Mammary epithelial cell (primary cell): ENCODE measurements at regions of chr13 and their contacts with region 1.

Region 1: DNA sequence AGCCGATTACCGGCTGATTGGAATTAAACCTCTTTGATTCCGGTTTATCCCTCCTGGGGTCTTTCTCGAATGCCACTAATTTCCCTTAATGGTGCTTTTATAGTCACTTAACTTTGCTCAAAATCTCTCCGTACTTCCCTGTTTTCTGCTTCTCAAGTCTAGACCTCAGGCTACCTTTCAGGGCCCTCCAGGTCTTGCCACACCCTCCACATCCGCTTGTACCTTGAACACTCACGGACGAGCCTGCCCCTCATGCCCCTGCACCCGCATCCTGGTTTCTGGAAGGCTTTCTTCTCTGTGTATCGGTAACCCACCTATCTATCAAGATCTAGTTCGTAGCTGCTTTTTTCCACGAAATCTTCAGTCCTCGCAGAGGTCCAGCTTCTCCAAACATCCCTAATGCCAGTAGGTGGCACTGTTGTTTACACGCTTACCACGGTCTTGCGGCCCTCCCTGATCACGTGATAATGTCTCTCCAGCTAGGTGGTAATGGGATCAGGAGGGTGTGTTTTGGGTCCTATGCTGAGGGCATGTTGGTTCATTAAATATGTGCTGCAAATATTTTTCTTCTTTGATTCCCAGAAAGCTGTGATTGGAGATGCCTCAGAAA is 13.8 kb downstream of the ATP12A start:
- DNase-seq: peak; percentile 47
- H3K4me3 ChIP-seq: no peak overlapping the region
- H3K27ac ChIP-seq: no peak overlapping the region
- H3K4me1 ChIP-seq: no peaks in the 10 kb centered on the region
- H3K27me3 ChIP-seq: no peaks in the 10 kb centered on the region
- CTCF ChIP-seq: peak; percentile 68 to 83

Region 2: DNA sequence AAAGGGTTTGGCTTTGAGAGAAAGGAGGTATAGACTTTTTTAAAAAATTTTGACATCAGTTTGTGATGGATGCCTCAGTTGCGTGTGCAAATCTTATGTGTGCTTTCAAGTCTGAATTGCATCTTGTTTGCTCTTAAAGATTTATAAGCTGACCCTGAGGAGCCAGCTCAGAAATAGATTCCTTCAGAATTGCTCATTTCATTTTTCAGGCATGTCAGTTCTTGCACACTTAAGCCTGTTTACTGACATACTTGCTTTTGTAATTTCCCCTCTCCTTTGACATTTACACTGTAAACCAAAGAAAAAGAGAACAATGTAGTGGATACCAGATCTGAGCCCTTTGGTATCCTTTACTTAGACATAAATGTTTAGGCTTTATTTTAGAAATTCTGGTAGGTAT is 157.6 kb after region 1 on chr13:
- CTCF ChIA-PET with region 1: interaction called, 12 read pairs
- dilution Hi-C with region 1: no loop called
- in situ Hi-C with region 1: no loop called
- intact Hi-C with region 1: no loop called
- DNase-seq: peak; percentile 78
- H3K4me3 ChIP-seq: no peak overlapping the region
- H3K27ac ChIP-seq: peak overlapping the region; percentile 41
- H3K4me1 ChIP-seq: peaks cover 10% of the 10 kb centered on the region
- H3K27me3 ChIP-seq: no peaks in the 10 kb centered on the region
- CTCF ChIP-seq: no peak

Region 3: GRCh38 chr13:25181597-25181996 is 487.6 kb after region 1 on chr13:
- CTCF ChIA-PET with region 1: no interaction called
- dilution Hi-C with region 1: no loop called
- in situ Hi-C with region 1: no loop called
- intact Hi-C with region 1: no loop called
- DNase-seq: no peak
- H3K4me3 ChIP-seq: no peak overlapping the region
- H3K27ac ChIP-seq: no peak overlapping the region
- H3K4me1 ChIP-seq: no peaks in the 10 kb centered on the region
- H3K27me3 ChIP-seq: peaks cover 2% of the 10 kb centered on the region
- CTCF ChIP-seq: no peak